Right ventricle myocardium superior (tissue), 1 donor: ENCODE measurements at regions of chr12 and their contacts with region 1.

Region 1: GRCh38 chr12:712172-712863 is 40.1 kb upstream of the WNK1 start:
- DNase-seq: no peak
- ATAC-seq: no peak

Region 2: GRCh38 chr12:575948-576612 is 136.2 kb before region 1 on chr12:
- intact Hi-C with region 1: loop called (anchors 10 kb)
- DNase-seq: peak; percentile 92
- ATAC-seq: peak; percentile 69

Region 3: DNA sequence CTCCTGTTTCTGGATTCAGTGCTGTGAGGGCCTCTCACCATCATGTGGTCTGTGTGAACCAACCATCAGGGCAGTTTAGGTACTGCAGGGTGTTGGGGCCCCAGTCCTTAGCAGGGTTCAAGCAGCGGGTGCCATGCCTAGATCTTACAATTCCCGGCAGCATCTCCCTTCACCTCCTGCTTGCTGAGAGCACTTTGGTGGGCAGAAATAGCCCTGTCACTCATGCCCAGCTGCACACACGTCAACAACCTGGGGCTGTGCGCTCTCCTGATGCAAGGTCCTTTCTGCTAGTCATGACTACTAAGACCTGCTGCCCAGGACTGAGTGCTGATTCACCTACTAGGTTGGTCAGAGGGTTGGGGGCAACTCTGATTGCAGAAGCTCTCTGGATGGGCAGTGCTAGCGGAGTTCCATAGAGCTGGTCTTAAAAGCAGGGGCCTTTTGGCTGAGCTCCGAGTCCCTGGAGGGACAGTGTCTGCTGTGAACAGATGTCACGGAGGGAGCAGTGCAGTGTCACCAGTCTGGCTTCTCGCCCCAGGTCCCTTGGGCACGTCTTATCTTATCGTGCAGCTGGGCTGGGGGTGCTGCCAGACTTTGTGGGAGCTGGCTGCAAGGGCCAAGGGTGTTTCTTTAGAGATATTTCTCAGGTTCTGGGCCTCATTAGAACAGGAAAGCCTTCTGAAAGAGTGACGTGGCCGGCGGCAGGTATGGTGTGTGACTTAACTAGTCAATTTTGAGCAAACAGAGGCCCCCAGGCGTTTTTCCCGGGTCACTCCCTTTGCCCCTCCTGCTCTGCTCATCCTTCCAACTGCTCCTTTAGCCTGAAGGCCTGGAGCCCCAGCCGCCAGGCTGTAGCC is 120.9 kb before region 1 on chr12:
- intact Hi-C with region 1: loop called (anchors 5 kb)
- DNase-seq: peak; percentile 93
- ATAC-seq: peak; percentile 92